Activated CD4-positive, alpha-beta memory T cell treated with anti-CD3 and anti-CD28 coated beads, Interleukin-2, amount 10 ng/mL, durations not matched to agents 7 days and 5 days (primary cell): ENCODE measurements at regions of chr12 and their contacts with region 1.

Region 1: DNA sequence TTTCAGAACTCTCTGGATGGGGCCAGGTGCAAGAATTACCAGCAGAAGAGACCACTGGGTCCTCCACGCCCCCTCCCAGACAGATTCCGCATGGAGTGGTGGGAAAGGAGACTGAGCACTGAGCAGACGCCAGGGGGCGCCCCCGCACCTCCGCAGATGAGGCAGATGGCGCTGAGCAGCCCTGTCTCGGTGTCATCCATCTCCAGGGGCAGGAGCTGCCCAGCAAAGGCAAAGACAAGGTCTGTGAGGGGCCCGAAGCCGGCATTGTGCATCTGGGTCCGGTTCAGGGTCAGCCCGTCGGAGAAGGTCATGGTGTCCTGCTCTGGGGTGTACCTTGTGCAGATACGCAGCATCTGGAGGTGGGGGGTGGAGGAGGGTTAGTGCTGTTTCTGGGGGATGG is 6.3 kb upstream of the ITGB7 start:
- DNase-seq: peak; percentile 84
- H3K4me3 Mint-ChIP-seq: no peak overlapping the region
- H3K27ac Mint-ChIP-seq: peak overlapping the region; percentile 55
- H3K4me1 Mint-ChIP-seq: peaks cover 91% of the 10 kb centered on the region
- H3K27me3 Mint-ChIP-seq: no peaks in the 10 kb centered on the region

Region 2: DNA sequence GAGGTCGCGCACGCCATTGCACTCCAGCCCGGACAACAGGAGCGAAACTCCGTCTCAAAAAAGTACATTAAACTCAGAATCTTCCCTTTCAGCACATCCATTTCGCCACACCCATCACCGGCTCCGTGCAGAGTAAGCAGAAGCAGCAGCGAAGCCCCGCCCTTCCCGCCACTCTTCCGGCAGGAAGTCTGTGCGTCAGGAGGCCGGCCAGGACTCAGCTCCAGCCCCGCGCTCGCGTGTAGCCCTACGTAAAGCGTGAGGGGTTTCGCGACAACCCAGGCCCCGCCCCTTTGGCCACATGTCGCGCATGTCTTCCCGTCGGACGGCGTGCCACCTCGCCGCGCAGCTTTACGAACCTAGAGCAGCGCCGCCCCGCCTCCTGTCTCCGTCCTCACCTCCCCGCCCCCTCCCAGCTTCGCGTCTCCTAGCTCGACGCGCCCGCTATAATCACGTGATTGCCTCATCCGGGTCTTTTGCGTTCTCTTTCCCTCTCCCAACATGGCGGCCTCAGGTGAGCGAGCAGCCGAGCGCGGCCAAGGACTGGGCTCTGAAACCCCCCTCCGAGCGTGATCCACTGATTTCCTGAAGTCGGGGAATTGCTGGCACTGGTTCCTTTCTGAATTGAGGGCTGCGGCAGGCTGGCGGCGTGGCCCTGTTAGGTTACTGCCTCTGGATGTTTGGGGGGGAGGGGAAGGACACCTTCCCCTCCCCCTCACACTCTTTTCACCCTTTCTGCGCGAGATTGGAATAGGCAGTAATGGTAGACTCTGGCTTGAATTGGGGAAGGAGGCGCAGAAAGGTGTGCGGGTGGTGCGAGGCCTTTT is 207.2 kb before region 1 on chr12 and contains the start of gene EIF4B:
- CTCF ChIA-PET with region 1: no interaction called
- POLR2A ChIA-PET with region 1: no interaction called
- DNase-seq: peak; percentile 100
- H3K4me3 Mint-ChIP-seq: peak within 1 kb of the TSS; percentile 97
- H3K27ac Mint-ChIP-seq: peak within 1 kb of the TSS; percentile 96
- H3K4me1 Mint-ChIP-seq: peaks cover 49% of the 10 kb centered on the region
- H3K27me3 Mint-ChIP-seq: peaks cover under 1% of the 10 kb centered on the region
- total RNA-seq, gene EIF4B: 303 to 311 TPM

Region 3: GRCh38 chr12:53200458-53201176 is 12.7 kb before region 1 on chr12:
- CTCF ChIA-PET with region 1: interaction called, 74 read pairs
- POLR2A ChIA-PET with region 1: interaction called, 117 read pairs
- DNase-seq: peak; percentile 47
- H3K4me3 Mint-ChIP-seq: peak overlapping the region; percentile 66
- H3K27ac Mint-ChIP-seq: peak overlapping the region; percentile 84
- H3K4me1 Mint-ChIP-seq: peaks cover 84% of the 10 kb centered on the region
- H3K27me3 Mint-ChIP-seq: no peaks in the 10 kb centered on the region

Region 4: GRCh38 chr12:53251477-53252348 is 38.4 kb after region 1 on chr12:
- CTCF ChIA-PET with region 1: interaction called, 211 read pairs
- POLR2A ChIA-PET with region 1: interaction called, 19 read pairs
- DNase-seq: peak; percentile 79
- H3K4me3 Mint-ChIP-seq: peak overlapping the region; percentile 97
- H3K27ac Mint-ChIP-seq: peak overlapping the region; percentile 81
- H3K4me1 Mint-ChIP-seq: peaks cover 52% of the 10 kb centered on the region
- H3K27me3 Mint-ChIP-seq: no peaks in the 10 kb centered on the region

Region 5: GRCh38 chr12:53287741-53288216 is 74.4 kb after region 1 on chr12:
- CTCF ChIA-PET with region 1: interaction called, 105 read pairs
- POLR2A ChIA-PET with region 1: interaction called, 24 read pairs
- DNase-seq: peak; percentile 76
- H3K4me3 Mint-ChIP-seq: no peak overlapping the region
- H3K27ac Mint-ChIP-seq: peak overlapping the region; percentile 45
- H3K4me1 Mint-ChIP-seq: peaks cover 12% of the 10 kb centered on the region
- H3K27me3 Mint-ChIP-seq: no peaks in the 10 kb centered on the region

Region 6: GRCh38 chr12:53295070-53295890 is 81.9 kb after region 1 on chr12 and contains the start of gene PFDN5:
- CTCF ChIA-PET with region 1: interaction called, 105 read pairs
- POLR2A ChIA-PET with region 1: interaction called, 24 read pairs
- DNase-seq: peak; percentile 90
- H3K4me3 Mint-ChIP-seq: peak within 1 kb of the TSS; percentile 97
- H3K27ac Mint-ChIP-seq: peak within 1 kb of the TSS; percentile 88
- H3K4me1 Mint-ChIP-seq: peaks cover 53% of the 10 kb centered on the region
- H3K27me3 Mint-ChIP-seq: no peaks in the 10 kb centered on the region
- total RNA-seq, gene PFDN5: 300 to 301 TPM

Region 7: DNA sequence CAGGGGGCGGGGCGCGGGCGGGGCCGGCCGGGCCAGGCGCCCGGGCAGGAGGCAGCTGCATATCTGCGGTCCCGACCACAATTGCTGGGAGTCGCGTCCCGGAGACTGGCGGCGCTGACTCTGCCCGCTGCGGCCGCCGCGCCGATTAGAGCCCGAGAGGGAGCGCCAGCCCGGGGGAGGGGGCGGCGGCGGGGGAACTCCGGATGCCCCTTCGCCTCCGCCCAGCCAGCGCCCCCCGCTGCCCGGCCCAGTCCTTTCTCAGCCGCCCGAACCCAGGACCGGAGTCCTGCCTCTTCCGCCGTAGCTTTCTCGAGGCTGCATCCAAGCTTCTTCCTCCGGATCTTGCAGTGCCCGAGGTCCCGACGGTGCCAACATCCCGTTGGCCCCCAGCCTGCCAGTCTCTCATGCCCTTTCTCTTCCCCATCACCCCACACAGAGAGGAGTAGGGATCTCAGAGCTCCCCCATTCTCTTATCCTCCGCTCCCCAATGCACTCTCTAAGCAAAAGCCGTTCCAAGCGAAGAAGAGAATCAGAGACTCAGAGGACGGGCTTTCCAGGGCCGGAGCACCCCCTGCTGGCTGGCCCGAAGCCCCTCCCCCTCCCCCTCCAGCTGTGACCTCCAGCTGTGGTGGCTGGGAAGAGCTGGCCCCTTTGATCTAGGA is 131.6 kb after region 1 on chr12:
- CTCF ChIA-PET with region 1: interaction called, 11 read pairs
- POLR2A ChIA-PET with region 1: interaction called, 3 read pairs
- DNase-seq: peak; percentile 70
- H3K4me3 Mint-ChIP-seq: peak overlapping the region; percentile 88
- H3K27ac Mint-ChIP-seq: peak overlapping the region; percentile 26
- H3K4me1 Mint-ChIP-seq: peaks cover 18% of the 10 kb centered on the region
- H3K27me3 Mint-ChIP-seq: peaks cover 15% of the 10 kb centered on the region